ENCODE measurements at regions of chr7 and their contacts with region 1.

Region 1: DNA sequence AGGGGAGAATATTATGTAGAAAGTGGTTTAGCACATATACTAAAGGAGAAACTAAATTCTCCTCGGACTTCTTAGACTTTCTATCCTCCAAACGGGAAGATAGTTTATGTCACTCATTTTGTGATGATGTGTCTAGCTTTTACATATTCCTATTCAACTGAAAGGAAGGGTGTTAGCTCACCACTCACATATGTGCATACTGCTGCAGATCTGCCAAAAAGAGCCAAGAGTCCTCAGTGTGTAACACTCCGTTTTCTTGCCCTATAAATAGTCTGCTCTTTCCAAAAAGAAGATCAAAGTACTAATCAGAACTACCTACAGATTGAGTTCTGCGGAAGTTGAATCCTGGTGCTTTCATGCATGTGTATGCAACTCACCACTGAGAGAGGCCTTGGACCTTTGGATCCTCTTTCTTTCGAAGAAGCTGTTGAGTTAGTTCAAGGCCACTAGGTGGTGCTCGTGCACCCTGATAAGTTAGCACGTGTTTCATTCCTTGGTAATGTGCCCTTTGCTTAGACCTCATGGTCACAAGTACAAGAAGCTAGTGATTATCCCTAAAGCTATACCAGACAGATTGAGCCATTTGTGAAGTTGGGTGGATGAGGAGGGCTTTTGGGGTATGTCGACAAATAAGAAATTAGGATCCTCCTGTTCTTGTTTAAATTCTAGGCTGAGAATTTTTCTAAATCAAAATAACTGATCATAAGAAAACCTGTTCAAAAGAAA is 14.1 kb downstream of the YAE1 start:
- DNase-seq: peak; percentile 93
- H3K4me3 ChIP-seq: no peak overlapping the region
- H3K27ac ChIP-seq: no peak overlapping the region
- H3K4me1 ChIP-seq: no peaks in the 10 kb centered on the region
- H3K27me3 ChIP-seq: no peaks in the 10 kb centered on the region
- CTCF ChIP-seq: peak; percentile 86

Region 2: GRCh38 chr7:39400836-39401235 is 179.5 kb before region 1 on chr7:
- CTCF ChIA-PET with region 1: no interaction called
- POLR2A ChIA-PET with region 1: no interaction called
- intact Hi-C with region 1: no loop called
- DNase-seq: peak; percentile 63
- H3K4me3 ChIP-seq: no peak overlapping the region
- H3K27ac ChIP-seq: no peak overlapping the region
- H3K4me1 ChIP-seq: peaks cover 11% of the 10 kb centered on the region
- H3K27me3 ChIP-seq: no peaks in the 10 kb centered on the region
- CTCF ChIP-seq: no peak

Region 3: DNA sequence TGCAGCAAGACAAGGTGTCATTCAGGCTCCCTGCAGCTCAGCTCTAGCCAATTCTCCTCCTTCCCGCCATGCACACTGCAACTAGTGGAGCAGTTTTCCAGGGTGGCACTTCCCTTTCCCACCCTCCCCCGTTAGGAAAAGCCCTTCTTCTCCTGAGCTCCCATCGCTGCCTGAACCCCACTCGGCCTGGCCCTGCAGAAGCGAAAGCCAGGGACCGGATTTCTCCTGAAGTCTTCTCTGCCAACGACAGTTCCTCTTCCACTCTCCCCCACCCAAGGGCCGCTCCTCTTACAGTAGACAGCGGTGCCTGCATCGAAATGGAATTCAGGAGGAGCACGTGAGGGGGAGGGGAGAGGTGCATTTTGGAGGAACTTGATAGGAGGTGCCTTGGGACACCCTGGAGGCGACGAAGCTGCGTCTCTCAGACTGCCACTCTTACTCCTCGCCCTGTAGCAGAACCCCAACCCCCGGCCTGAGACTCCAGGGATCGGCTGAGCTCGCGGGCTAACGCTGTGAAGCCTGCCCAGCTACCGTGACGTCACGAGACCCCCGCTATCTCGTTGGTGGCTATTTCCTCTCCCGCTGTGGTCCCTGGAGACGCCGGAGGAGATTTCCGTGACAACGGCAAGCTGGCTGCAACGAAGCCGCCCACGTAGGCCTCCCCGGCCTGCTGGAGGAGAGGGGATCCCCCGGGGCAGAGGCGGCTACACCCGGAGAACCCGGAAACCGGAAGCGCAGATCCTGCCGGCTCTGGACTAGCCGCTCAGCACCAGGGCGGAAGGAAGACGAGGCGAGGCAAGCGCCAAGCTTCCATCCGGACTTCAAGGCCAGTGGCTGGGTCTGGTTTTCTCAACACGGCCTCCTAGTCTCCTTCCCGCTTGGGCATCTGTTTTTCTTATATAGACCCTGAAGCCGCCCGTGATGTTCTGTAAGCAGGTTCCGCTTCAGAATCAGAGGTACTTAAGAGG is 152.8 kb after region 1 on chr7:
- CTCF ChIA-PET with region 1: interaction called, 10 read pairs
- POLR2A ChIA-PET with region 1: interaction called, 4 read pairs
- intact Hi-C with region 1: no loop called
- DNase-seq: peak; percentile 98
- H3K4me3 ChIP-seq: peak overlapping the region; percentile 54
- H3K27ac ChIP-seq: peak overlapping the region; percentile 76
- H3K4me1 ChIP-seq: peaks cover 22% of the 10 kb centered on the region
- H3K27me3 ChIP-seq: no peaks in the 10 kb centered on the region
- CTCF ChIP-seq: no peak

Region 4: DNA sequence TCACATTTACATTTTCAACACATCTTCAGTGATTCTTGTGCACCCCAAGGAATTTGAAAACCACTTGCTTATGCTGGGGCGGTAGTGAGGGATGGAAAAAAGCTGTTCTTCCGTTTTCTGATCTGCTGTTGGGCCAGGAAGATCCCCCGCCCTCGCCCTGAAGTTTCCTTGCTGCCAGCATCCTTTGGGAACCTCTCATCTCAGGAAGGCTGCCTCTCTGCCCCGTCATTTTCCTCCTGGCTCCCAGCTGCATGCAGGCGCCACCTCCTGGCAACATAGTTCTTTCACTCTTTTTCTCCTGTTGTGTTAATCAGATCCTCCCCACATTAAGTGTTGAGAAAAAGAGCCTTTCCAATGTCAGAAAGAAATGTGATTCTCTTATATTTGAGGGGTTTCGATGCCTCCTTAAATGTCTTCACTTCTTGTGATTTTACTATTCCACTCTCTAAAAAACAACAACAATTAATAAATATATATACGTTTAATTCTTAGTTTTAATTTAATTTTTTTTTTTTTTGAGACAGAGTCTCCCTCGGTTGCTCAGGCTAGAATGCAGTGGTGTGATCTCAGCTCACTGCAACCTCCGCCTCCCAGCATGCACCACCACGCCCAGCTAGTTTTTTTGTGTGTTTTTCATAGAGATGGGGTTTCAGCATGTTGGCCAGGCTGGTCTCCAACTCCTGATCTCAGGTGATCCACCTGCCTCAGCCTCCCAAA is 165.9 kb after region 1 on chr7:
- CTCF ChIA-PET with region 1: interaction called, 61 read pairs
- POLR2A ChIA-PET with region 1: no interaction called
- intact Hi-C with region 1: loop called (anchors 1 kb)
- DNase-seq: peak; percentile 86
- H3K4me3 ChIP-seq: no peak overlapping the region
- H3K27ac ChIP-seq: no peak overlapping the region
- H3K4me1 ChIP-seq: no peaks in the 10 kb centered on the region
- H3K27me3 ChIP-seq: no peaks in the 10 kb centered on the region
- CTCF ChIP-seq: peak; percentile 87

Region 5: GRCh38 chr7:40057292-40057691 is 477.0 kb after region 1 on chr7:
- CTCF ChIA-PET with region 1: interaction called, 14 read pairs
- POLR2A ChIA-PET with region 1: no interaction called
- intact Hi-C with region 1: loop called (anchors 2 kb)
- DNase-seq: peak; percentile 27
- H3K4me3 ChIP-seq: no peak overlapping the region
- H3K27ac ChIP-seq: no peak overlapping the region
- H3K4me1 ChIP-seq: peaks cover 8% of the 10 kb centered on the region
- H3K27me3 ChIP-seq: no peaks in the 10 kb centered on the region
- CTCF ChIP-seq: no peak

Measured in A673 (cell line).